Naive thymus-derived CD8-positive, alpha-beta T cell (primary cell): ENCODE measurements at regions of chr16 and their contacts with region 1.

Region 1: DNA sequence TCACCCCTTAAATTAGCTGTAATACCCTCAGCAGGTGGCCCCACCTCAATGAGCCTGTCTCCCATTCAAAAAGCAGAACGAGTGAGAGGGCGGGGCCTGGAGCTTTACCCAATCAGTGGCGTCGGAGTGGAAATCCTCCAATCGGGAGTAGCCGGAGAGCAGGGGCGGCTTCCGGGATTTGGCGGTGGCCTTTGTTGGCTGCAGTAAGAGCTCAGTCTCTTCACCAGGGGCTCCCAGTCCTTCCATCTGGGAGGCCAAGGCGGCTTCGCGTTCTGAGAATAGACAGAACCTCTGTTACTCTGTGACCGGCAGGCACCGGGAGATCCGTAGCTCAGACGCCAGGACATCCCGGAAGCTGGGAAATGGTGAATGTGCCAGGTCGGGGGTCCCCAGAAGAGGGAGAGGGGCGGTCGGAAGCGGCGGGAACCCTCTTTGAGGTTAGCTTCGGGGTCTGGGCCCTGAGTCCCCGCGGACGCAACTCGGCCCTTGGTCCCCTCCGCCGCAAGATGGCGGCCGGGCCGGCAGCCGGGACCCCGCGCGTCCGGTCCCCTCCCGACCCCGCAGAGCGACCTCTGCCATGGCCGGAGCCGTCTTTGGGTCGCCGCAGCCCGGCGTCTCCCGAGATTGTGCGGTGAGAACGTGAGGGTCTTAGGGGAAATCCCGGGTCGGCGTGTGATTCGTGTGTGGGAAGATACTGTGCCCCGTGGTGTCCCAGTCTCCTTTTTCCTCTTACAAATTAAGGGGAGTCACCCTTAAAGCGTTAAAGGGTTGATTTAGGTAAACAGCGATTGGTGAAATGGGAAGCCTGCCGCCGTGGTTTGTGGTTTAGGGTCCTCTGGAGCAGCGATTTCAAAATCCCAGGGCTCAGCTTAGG is 160.3 kb upstream of the ZNF267 start:
- DNase-seq: peak; percentile 76 to 95 (median 90)
- ATAC-seq: peak; percentile 86 to 92
- H3K4me3 Mint-ChIP-seq: peak overlapping the region; percentile 98 to 100 (median 99)
- H3K27ac Mint-ChIP-seq: peak overlapping the region; percentile 83 to 99 (median 99)
- H3K4me1 Mint-ChIP-seq: peaks cover 43 to 79% (median 67%) of the 10 kb centered on the region in 4 donors
- H3K27me3 Mint-ChIP-seq: no peaks in the 10 kb centered on the region

Region 2: GRCh38 chr16:31700526-31701388 is 12.6 kb before region 1 on chr16:
- POLR2A ChIA-PET with region 1: interaction called, 26 read pairs
- DNase-seq: peak; percentile 84 to 94 (median 88)
- ATAC-seq: peak; percentile 81 to 87
- H3K4me3 Mint-ChIP-seq: peak overlapping the region; percentile 79 to 95 (median 90)
- H3K27ac Mint-ChIP-seq: peak overlapping the region; percentile 85 to 98 (median 94)
- H3K4me1 Mint-ChIP-seq: peaks cover 23 to 41% (median 28%) of the 10 kb centered on the region in 4 donors
- H3K27me3 Mint-ChIP-seq: no peaks in the 10 kb centered on the region